Naive thymus-derived CD4-positive, alpha-beta T cell (primary cell): ENCODE measurements at regions of chr6 and their contacts with region 1.

Region 1: DNA sequence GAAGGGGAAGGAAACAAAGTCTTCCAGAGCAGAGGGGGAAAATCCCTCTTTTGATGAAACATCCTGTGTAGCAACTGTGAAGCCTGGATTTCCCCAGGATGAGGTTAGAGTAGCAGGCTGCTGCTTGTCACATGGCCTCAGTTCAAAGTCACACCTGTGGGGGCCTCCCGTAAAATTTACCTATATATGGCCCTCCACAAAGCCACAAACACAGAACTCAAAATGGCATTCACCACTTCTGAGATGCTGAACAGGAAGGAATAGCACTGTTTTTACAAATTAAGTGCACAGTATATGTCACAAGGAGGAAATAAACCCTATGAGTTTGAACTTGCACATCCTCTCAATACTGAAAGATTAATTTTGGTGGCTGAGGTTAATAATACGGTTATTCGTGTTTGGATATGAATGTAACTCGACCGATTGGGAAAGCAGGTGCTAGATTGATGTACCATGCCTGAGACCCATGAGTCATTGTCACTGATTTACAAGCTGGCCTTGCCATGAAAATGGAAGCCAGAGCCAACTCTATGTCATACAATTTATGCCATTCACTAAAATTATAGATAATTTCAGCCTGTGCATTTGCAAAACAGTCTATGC is 70.6 kb downstream of the SGK1 start:
- DNase-seq: peak in 8 of 9 donors; percentile 67 to 96 (median 93)
- ATAC-seq: peak; percentile 97
- H3K4me3 ChIP-seq: peak overlapping the region; percentile 21
- H3K4me3 Mint-ChIP-seq: peak overlapping the region; percentile 50 to 84 (median 75)
- H3K27ac ChIP-seq: peak overlapping the region; percentile 77
- H3K27ac Mint-ChIP-seq: peak overlapping the region; percentile 83 to 99 (median 94)
- H3K4me1 ChIP-seq: peaks cover 34 to 60% of the 10 kb centered on the region in 2 donors
- H3K4me1 Mint-ChIP-seq: peaks cover 30 to 75% (median 63%) of the 10 kb centered on the region in 7 donors
- H3K27me3 ChIP-seq: no peaks in the 10 kb centered on the region
- H3K27me3 Mint-ChIP-seq: no peaks in the 10 kb centered on the region

Region 2: GRCh38 chr6:132813173-132813856 is 1434.0 kb before region 1 on chr6:
- CTCF ChIA-PET with region 1: no interaction called
- POLR2A ChIA-PET with region 1: no interaction called
- intact Hi-C with region 1: loop called in 1 of 2 experiments (anchors 2 kb)
- DNase-seq: peak in 8 of 9 donors; percentile 31 to 71 (median 62)
- ATAC-seq: no peak
- H3K4me3 ChIP-seq: peak overlapping the region; percentile 90
- H3K4me3 Mint-ChIP-seq: peak overlapping the region; percentile 91 to 100 (median 98)
- H3K27ac ChIP-seq: peak overlapping the region; percentile 80
- H3K27ac Mint-ChIP-seq: peak overlapping the region; percentile 95 to 100 (median 98)
- H3K4me1 ChIP-seq: peaks cover 23 to 26% of the 10 kb centered on the region in 2 donors
- H3K4me1 Mint-ChIP-seq: peaks cover 29 to 54% (median 43%) of the 10 kb centered on the region in 7 donors
- H3K27me3 ChIP-seq: no peaks in the 10 kb centered on the region
- H3K27me3 Mint-ChIP-seq: peaks cover 0 to 30% (median 0%) of the 10 kb centered on the region in 5 donors

Region 3: DNA sequence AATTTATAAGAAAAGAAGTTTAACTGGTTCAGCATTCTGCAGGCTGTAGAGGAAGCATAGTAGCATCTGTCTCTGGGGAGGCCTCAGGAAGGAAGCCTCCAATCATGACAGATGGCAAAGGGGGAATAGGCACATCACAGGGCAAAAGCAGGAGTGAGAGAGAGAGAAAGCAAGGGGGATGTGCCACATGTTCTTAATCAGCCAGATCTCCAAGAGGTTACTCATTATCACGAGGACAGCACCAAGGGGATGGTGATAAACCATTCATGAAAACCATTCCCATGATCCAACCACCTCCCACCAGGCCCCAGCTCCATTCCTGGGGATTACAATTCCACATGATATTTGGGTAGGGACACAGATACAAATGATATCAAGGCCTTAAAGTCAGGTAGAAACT is 576.0 kb before region 1 on chr6:
- CTCF ChIA-PET with region 1: no interaction called
- POLR2A ChIA-PET with region 1: no interaction called
- intact Hi-C with region 1: no loop called
- DNase-seq: no peak
- ATAC-seq: no peak
- H3K4me3 ChIP-seq: no peak overlapping the region
- H3K4me3 Mint-ChIP-seq: no peak overlapping the region
- H3K27ac ChIP-seq: no peak overlapping the region
- H3K27ac Mint-ChIP-seq: no peak overlapping the region
- H3K4me1 ChIP-seq: no peaks in the 10 kb centered on the region
- H3K4me1 Mint-ChIP-seq: no peaks in the 10 kb centered on the region
- H3K27me3 ChIP-seq: no peaks in the 10 kb centered on the region
- H3K27me3 Mint-ChIP-seq: peaks cover 0 to 6% (median 4%) of the 10 kb centered on the region in 5 donors

Region 4: DNA sequence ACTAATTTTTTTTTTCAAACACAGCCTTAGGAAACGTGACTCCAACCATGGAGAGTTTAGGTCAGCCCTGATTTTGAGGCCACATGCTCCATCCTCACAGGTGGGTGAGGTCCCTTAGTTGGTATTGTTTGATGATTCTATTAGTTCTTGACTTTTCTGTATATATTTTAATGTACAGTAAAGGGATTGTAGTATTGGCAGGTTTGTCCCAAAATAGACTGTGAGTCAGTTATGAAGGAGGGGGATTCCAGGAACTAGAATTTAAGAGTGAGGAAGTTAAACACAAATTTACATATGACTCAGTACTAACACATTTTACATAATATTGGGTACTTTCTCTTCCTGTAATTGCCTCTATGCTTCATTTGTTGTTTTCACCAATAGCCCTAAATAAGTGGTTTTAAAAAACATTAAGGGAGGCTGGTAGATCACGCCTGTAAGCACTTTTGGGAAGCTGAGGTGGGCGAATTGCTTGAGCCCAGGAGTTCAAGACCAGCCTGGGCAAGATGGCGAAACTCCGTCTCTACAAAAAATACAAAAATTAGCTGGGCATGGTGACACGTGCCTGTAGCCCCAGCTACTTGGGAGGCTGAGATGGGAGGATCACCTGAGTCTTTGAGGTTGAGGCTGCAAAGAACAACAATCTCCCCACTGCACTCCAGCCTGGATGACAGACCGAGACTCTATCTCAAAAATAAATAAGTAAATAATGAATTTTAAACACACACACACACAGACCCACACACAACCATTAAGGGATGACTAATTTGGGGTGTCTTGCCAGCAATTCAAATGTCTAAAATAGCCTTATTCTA is 11.2 kb before region 1 on chr6:
- CTCF ChIA-PET with region 1: no interaction called
- POLR2A ChIA-PET with region 1: no interaction called
- intact Hi-C with region 1: loop called (anchors 1 to 2 kb)
- DNase-seq: no peak
- ATAC-seq: peak; percentile 69
- H3K4me3 ChIP-seq: no peak overlapping the region
- H3K4me3 Mint-ChIP-seq: peak overlapping the region in 2 of 10 donors; percentile 29 to 48
- H3K27ac ChIP-seq: no peak overlapping the region
- H3K27ac Mint-ChIP-seq: peak overlapping the region in 6 of 9 donors; percentile 6 to 86 (median 43)
- H3K4me1 ChIP-seq: peaks cover 18 to 22% of the 10 kb centered on the region in 2 donors
- H3K4me1 Mint-ChIP-seq: peaks cover 8 to 50% (median 43%) of the 10 kb centered on the region in 7 donors
- H3K27me3 ChIP-seq: no peaks in the 10 kb centered on the region
- H3K27me3 Mint-ChIP-seq: no peaks in the 10 kb centered on the region

Region 5: DNA sequence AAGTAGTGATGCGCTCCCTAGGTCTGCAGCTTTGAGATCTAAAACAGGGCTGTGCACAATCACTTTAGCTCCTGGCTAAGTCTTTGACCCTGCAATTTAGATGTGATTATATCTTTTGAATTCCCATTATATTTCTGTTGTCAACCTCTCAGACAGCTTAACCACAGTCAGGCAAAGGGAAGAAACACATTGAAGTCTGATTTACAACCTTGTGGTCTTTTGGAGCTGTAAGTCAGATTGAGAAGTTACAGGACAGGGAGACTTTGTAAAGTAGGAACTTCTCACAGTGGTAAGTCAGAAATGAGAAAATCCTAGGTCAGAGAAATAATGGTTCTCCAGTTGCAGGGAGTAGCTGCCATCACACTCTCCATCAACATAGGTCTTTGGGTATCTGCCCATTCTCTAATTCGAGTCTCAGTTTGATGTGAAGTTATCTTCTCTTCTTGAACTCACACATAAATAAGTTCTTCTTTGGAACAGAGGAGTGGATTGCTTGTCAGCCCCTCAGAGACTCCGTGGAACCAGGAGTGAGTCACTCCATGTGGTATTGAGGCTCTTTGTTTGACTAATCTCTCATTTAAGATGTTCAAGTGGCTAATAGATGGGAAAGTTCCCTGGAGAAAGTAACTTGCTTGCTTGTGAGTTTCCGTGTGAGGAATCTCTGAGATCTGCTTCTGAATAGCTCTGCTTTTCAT is 105.6 kb after region 1 on chr6:
- CTCF ChIA-PET with region 1: no interaction called
- POLR2A ChIA-PET with region 1: no interaction called
- intact Hi-C with region 1: loop called in 1 of 2 experiments (anchors 5 kb)
- DNase-seq: no peak
- ATAC-seq: no peak
- H3K4me3 ChIP-seq: no peak overlapping the region
- H3K4me3 Mint-ChIP-seq: peak overlapping the region in 7 of 10 donors; percentile 13 to 93 (median 83)
- H3K27ac ChIP-seq: no peak overlapping the region
- H3K27ac Mint-ChIP-seq: peak overlapping the region; percentile 21 to 98 (median 96)
- H3K4me1 ChIP-seq: peaks cover 0 to 18% of the 10 kb centered on the region in 2 donors
- H3K4me1 Mint-ChIP-seq: peaks cover 8 to 34% (median 28%) of the 10 kb centered on the region in 7 donors
- H3K27me3 ChIP-seq: no peaks in the 10 kb centered on the region
- H3K27me3 Mint-ChIP-seq: no peaks in the 10 kb centered on the region

Region 6: DNA sequence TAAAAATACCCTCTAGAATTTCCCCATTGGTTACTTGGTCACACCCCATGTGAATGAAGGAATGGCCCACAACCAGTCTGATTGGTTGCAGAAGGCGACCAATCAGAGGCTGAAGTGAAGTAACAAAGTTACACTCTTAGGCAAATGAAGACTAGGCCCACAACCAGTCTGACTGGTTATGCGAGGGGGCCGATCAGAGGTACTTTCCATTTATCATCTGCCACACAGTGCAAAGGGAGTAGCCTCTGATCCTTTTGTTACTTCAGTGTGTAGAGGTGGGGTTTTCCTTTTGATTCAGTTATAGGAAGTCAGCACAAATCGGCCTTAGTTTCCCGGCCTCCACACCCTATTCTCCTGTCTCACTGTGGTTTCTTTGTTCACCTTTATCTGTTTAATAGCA is 131.8 kb after region 1 on chr6:
- CTCF ChIA-PET with region 1: no interaction called
- POLR2A ChIA-PET with region 1: no interaction called
- intact Hi-C with region 1: loop called (anchors 2 to 5 kb)
- DNase-seq: peak in 2 of 9 donors; percentile 38 to 39
- ATAC-seq: peak; percentile 78
- H3K4me3 ChIP-seq: no peak overlapping the region
- H3K4me3 Mint-ChIP-seq: peak overlapping the region in 5 of 10 donors; percentile 31 to 66 (median 43)
- H3K27ac ChIP-seq: no peak overlapping the region
- H3K27ac Mint-ChIP-seq: peak overlapping the region in 7 of 9 donors; percentile 26 to 84 (median 56)
- H3K4me1 ChIP-seq: peaks cover 14 to 17% of the 10 kb centered on the region in 2 donors
- H3K4me1 Mint-ChIP-seq: peaks cover 15 to 42% (median 41%) of the 10 kb centered on the region in 7 donors
- H3K27me3 ChIP-seq: no peaks in the 10 kb centered on the region
- H3K27me3 Mint-ChIP-seq: no peaks in the 10 kb centered on the region

Region 7: DNA sequence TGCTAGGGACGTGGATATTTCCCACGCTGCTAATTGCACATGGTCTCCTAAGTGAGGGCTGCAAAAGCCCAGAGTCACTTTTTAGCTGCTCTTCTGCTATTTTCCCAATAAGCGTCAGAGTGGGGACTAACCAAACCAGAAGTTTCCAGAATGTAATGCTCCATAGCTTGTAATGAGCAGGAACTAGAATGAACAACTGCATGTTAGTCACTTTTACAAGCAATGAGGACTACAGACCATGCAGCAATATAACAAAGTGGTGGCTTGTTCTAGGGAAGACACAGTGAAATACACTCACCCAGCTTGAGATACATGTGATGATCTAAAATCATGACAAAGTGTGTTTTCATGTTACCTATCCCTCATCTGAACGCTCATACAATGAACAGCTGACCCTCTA is 384.7 kb after region 1 on chr6:
- CTCF ChIA-PET with region 1: no interaction called
- POLR2A ChIA-PET with region 1: no interaction called
- intact Hi-C with region 1: loop called in 1 of 2 experiments (anchors 2 kb)
- DNase-seq: no peak
- ATAC-seq: peak; percentile 63
- H3K4me3 ChIP-seq: no peak overlapping the region
- H3K4me3 Mint-ChIP-seq: peak overlapping the region in 8 of 10 donors; percentile 30 to 96 (median 84)
- H3K27ac ChIP-seq: no peak overlapping the region
- H3K27ac Mint-ChIP-seq: peak overlapping the region in 2 of 9 donors; percentile 10 to 78
- H3K4me1 ChIP-seq: no peaks in the 10 kb centered on the region
- H3K4me1 Mint-ChIP-seq: peaks cover 11 to 45% (median 34%) of the 10 kb centered on the region in 7 donors
- H3K27me3 ChIP-seq: no peaks in the 10 kb centered on the region
- H3K27me3 Mint-ChIP-seq: peaks cover 0 to 35% (median 0%) of the 10 kb centered on the region in 5 donors